Naive thymus-derived CD4-positive, alpha-beta T cell (primary cell): ENCODE measurements at regions of chr20 and their contacts with region 1.

Region 1: DNA sequence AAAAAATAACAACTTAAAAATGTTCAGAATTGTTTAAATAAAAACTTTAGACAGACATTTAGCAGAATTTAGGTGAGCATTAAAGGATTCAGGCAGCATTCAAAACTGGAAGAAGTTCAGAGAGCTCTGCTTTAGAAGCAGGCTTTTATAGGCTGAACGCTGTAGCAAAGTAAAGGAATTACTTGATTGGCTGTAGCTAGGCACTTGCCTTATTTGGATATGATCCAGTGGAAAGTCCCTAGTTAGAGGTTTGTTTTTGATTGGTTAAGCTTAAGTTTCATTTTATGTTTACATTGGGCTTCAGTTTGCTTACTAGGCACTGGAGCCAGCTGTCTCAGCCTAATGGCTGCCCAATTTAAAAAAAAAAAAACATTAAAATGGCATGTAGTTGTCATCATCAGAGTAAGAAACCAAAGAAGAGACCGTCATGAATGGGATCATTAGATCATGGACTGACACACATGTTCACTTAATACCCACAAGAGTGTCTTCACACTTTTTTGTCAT is 65.1 kb downstream of the CBFA2T2 start:
- DNase-seq: peak in 7 of 9 donors; percentile 72 to 92 (median 88)
- ATAC-seq: peak; percentile 98
- H3K4me3 ChIP-seq: peak overlapping the region; percentile 3
- H3K4me3 Mint-ChIP-seq: peak overlapping the region; percentile 51 to 83 (median 75)
- H3K27ac ChIP-seq: peak overlapping the region; percentile 81
- H3K27ac Mint-ChIP-seq: peak overlapping the region; percentile 90 to 98 (median 95)
- H3K4me1 ChIP-seq: peaks cover 16% of the 10 kb centered on the region in 2 donors
- H3K4me1 Mint-ChIP-seq: peaks cover 15 to 49% (median 39%) of the 10 kb centered on the region in 7 donors
- H3K27me3 ChIP-seq: no peaks in the 10 kb centered on the region
- H3K27me3 Mint-ChIP-seq: no peaks in the 10 kb centered on the region

Region 2: GRCh38 chr20:33489495-33490022 is 65.4 kb before region 1 on chr20:
- CTCF ChIA-PET with region 1: interaction called, 5 read pairs
- POLR2A ChIA-PET with region 1: interaction called, 11 read pairs
- intact Hi-C with region 1: loop called (anchors 1 to 2 kb)
- DNase-seq: peak; percentile 97 to 99 (median 99)
- ATAC-seq: peak; percentile 97
- H3K4me3 ChIP-seq: peak overlapping the region; percentile 75
- H3K4me3 Mint-ChIP-seq: peak overlapping the region; percentile 84 to 95 (median 88)
- H3K27ac ChIP-seq: peak overlapping the region; percentile 94
- H3K27ac Mint-ChIP-seq: peak overlapping the region; percentile 86 to 96 (median 90)
- H3K4me1 ChIP-seq: peaks cover 4 to 9% of the 10 kb centered on the region in 2 donors
- H3K4me1 Mint-ChIP-seq: peaks cover 0 to 30% (median 13%) of the 10 kb centered on the region in 7 donors
- H3K27me3 ChIP-seq: no peaks in the 10 kb centered on the region
- H3K27me3 Mint-ChIP-seq: no peaks in the 10 kb centered on the region

Region 3: DNA sequence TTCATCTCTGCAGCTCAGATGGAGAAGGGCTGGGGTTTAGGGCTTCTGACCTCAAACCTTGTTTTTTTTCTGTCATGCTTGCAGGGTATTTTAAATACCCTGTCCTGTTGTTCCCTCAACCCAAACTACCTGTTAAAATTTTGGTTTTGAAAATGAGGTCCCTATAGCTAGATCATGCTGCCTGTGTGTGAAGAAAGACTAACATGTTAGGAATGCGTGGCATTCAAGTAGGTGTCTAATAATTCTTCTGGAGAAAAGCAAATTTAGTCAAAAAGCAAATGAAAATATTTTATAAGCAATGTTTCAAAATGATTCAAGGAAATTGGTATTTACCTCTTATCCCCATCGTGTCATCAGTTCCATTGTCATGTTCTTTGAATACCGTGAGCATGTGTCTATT is 30.0 kb after region 1 on chr20:
- CTCF ChIA-PET with region 1: no interaction called
- POLR2A ChIA-PET with region 1: no interaction called
- intact Hi-C with region 1: no loop called
- DNase-seq: no peak
- ATAC-seq: no peak
- H3K4me3 ChIP-seq: no peak overlapping the region
- H3K4me3 Mint-ChIP-seq: no peak overlapping the region
- H3K27ac ChIP-seq: no peak overlapping the region
- H3K27ac Mint-ChIP-seq: no peak overlapping the region
- H3K4me1 ChIP-seq: no peaks in the 10 kb centered on the region
- H3K4me1 Mint-ChIP-seq: peaks cover 5 to 15% (median 12%) of the 10 kb centered on the region in 7 donors
- H3K27me3 ChIP-seq: no peaks in the 10 kb centered on the region
- H3K27me3 Mint-ChIP-seq: no peaks in the 10 kb centered on the region